ENCODE measurements at regions of chr20 and their contacts with region 1.

Region 1: GRCh38 chr20:45934586-45935415 is at the start of gene PCIF1:
- DNase-seq: peak; percentile 99
- H3K4me3 Mint-ChIP-seq: peak within 1 kb of the TSS; percentile 93
- H3K27ac Mint-ChIP-seq: peak within 1 kb of the TSS; percentile 95
- H3K4me1 Mint-ChIP-seq: peaks cover 30% of the 10 kb centered on the region
- H3K27me3 Mint-ChIP-seq: no peaks in the 10 kb centered on the region
- total RNA-seq, gene PCIF1: 39.2 to 39.5 TPM

Region 2: DNA sequence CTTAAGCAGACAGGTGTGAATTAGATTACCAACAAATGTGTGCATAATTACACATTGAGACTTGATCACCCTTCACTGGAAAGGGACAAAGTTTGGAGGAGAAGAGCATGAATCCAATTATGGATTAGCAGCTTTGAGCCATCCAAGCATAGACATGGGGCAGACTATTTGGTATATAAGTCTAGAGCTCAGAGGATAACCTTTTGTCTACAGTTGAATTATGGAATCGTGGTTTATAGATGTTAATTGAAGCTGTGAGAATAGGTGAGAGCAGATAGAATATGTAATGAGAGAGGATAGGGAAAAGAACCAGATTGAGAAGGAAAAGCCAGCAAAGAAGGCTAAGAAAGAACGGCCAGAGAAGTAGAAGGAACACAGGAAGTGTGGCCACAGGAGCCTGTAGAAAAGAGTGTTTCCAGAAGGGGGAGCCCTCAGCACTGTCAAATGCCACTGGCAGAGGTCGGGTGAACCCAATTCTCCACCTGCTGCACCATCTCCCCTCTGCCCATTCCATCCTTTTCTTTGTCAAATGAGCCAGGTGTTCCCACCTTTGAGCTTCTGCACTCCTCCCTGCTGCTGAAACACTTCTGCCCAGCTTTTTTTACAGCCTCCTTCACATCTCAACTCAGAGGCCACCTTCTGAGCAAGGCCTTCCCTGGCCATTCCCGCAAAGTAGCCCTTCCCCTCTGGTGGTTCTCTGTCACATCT is 135.7 kb before region 1 on chr20:
- CTCF ChIA-PET with region 1: interaction called, 9 read pairs
- intact Hi-C with region 1: loop called (anchors 5 kb)
- DNase-seq: peak; percentile 82
- H3K4me3 Mint-ChIP-seq: no peak overlapping the region
- H3K27ac Mint-ChIP-seq: no peak overlapping the region
- H3K4me1 Mint-ChIP-seq: peaks cover 10% of the 10 kb centered on the region
- H3K27me3 Mint-ChIP-seq: no peaks in the 10 kb centered on the region

Region 3: GRCh38 chr20:45822857-45823256 is 111.9 kb before region 1 on chr20:
- CTCF ChIA-PET with region 1: no interaction called
- intact Hi-C with region 1: no loop called
- DNase-seq: no peak
- H3K4me3 Mint-ChIP-seq: no peak overlapping the region
- H3K27ac Mint-ChIP-seq: no peak overlapping the region
- H3K4me1 Mint-ChIP-seq: peaks cover 13% of the 10 kb centered on the region
- H3K27me3 Mint-ChIP-seq: peaks cover 35% of the 10 kb centered on the region

Region 4: GRCh38 chr20:45857114-45857881 is 77.5 kb before region 1 on chr20 and contains the starts of genes ACOT8 and ZSWIM3:
- CTCF ChIA-PET with region 1: interaction called, 4 read pairs
- intact Hi-C with region 1: loop called (anchors 1 kb)
- DNase-seq: peak; percentile 98
- H3K4me3 Mint-ChIP-seq: peak within 1 kb of the TSS; percentile 95
- H3K27ac Mint-ChIP-seq: peak within 1 kb of the TSS; percentile 98
- H3K4me1 Mint-ChIP-seq: peaks cover 44% of the 10 kb centered on the region
- H3K27me3 Mint-ChIP-seq: no peaks in the 10 kb centered on the region
- total RNA-seq, gene ACOT8: 21.4 to 23.3 TPM
- total RNA-seq, gene ZSWIM3: 3.3 to 3.7 TPM

Region 5: DNA sequence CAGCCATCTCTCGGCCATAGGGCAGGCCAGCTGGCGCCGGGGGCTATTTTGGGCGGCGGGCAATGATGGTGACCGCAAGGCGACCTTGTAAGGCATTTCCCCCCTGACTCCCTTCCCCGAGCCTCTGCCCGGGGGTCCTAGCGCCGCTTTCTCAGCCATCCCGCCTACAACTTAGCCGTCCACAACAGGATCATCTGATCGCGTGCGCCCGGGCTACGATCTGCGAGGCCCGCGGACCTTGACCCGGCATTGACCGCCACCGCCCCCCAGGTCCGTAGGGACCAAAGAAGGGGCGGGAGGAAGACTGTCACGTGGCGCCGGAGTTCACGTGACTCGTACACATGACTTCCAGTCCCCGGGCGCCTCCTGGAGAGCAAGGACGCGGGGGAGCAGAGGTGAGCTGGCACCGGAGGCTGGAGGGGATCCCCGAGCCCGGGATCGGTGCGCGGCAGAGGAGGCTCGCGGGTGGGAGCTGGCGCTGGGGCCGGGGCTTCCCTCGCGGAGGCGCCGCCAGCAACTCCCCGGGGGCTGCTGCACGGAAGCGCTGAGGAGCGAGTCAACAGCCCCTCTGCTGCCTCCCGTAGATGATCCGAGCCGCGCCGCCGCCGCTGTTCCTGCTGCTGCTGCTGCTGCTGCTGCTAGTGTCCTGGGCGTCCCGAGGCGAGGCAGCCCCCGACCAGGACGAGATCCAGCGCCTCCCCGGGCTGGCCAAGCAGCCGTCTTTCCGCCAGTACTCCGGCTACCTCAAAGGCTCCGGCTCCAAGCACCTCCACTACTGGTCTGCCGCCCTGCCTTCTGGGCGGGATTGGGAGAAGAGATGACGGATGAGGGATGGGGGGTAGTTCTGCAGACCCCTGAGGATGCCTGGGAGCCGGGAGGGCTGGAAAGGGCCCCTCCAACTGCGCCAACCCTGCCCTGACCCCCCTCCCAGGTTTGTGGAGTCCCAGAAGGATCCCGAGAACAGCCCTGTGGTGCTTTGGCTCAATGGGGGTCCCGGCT is 43.5 kb before region 1 on chr20 and contains the starts of genes CTSA and NEURL2:
- CTCF ChIA-PET with region 1: no interaction called
- intact Hi-C with region 1: loop called (anchors 1 kb)
- DNase-seq: peak; percentile 91
- H3K4me3 Mint-ChIP-seq: peak within 1 kb of the TSS; percentile 89
- H3K27ac Mint-ChIP-seq: peak within 1 kb of the TSS; percentile 84
- H3K4me1 Mint-ChIP-seq: peaks cover 22% of the 10 kb centered on the region
- H3K27me3 Mint-ChIP-seq: no peaks in the 10 kb centered on the region
- total RNA-seq, gene CTSA: 28.7 to 31.5 TPM
- total RNA-seq, gene NEURL2: 0.99 to 1.4 TPM

Region 6: GRCh38 chr20:45963059-45964005 is 28.5 kb after region 1 on chr20:
- CTCF ChIA-PET with region 1: interaction called, 4 read pairs
- intact Hi-C with region 1: loop called (anchors 2 kb)
- DNase-seq: no peak
- H3K4me3 Mint-ChIP-seq: no peak overlapping the region
- H3K27ac Mint-ChIP-seq: no peak overlapping the region
- H3K4me1 Mint-ChIP-seq: peaks cover 2% of the 10 kb centered on the region
- H3K27me3 Mint-ChIP-seq: no peaks in the 10 kb centered on the region

Region 7: DNA sequence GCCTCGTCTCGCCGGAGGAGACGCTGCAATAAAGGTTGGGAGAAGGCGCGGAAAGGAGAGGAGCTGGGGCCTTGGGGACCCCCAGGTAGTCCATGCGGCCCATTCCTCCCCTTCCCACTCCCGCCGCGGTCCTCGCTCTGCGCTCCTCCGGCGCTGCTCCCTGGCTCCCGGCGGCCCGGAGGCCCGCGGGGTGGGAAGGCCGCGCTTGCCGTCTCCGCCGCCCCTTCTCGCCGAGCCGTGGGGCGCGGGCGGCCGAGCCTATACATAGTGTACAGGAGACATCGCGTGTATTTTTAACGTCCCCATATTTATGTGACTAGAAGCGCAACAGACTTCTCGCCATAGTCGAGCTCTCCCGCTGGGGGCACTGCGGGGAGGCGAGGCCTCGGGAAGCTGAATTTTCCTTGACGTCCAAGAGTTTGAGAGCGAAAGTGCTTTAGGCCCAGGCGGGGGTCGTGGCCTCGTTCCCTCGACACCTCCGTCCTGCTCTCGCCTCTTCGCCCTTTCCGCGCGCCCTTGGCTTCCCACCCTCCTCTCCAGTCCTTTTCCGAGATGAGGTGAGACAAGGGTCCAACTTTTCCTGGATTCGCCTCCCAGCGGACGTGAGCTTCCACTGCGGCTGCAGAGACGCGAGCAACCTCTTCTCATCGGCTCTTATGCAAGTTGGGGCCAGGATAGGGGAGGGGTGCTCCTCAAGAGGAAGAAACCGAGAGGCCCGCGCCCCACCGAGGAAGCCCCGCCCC is 123.2 kb after region 1 on chr20:
- CTCF ChIA-PET with region 1: no interaction called
- intact Hi-C with region 1: no loop called
- DNase-seq: peak; percentile 19
- H3K4me3 Mint-ChIP-seq: no peak overlapping the region
- H3K27ac Mint-ChIP-seq: no peak overlapping the region
- H3K4me1 Mint-ChIP-seq: peaks cover 41% of the 10 kb centered on the region
- H3K27me3 Mint-ChIP-seq: peaks cover 24% of the 10 kb centered on the region

Region 8: DNA sequence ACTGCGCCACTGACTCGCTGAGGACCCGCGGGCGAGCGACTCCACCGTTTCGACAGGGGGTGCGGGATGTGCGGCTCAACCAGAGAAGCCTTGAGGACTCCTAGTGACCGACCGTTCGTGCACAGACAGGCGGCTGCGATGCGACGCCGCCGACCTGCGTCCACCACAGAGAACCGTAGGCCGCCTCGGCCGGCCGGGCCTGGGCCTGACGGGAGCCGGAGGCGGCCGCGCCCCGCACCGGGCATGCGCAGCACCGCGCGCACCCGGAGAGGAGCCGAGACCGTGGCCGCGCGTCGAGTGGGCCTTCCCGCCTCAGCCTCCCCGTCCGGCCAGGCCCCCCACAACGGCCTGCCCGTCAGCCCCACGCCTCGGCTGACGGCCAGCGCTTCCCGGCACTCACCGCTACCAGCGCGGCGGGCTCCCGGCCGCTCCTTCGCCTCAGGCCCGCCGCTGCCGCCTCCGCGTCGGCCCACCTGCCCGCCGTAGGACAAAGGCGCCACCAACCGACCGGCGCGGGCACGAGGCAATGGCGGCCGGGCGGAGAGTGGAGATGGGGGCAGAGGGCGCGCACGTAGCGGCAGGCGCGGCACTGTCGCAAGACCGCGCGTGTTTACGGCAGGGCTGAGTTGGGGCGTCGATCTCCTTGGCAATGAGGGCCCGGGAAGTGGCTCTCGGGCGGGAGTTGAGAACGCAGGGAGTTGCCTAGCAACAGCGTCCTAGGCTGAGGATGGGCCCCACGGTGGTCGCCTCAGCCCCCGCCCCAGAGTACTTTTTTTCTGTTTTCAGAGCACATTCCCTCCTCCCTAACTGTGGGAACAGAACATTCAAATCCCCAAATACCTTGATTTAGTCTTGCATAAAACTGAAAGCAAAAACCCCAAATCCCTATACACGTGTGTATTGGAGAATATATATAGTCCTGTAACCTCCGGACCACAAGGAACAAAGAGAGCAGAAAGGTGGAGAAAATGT is 154.9 kb after region 1 on chr20 and contains the start of gene NCOA5:
- CTCF ChIA-PET with region 1: no interaction called
- intact Hi-C with region 1: loop called (anchors 1 kb)
- DNase-seq: peak; percentile 96
- H3K4me3 Mint-ChIP-seq: peak within 1 kb of the TSS; percentile 86
- H3K27ac Mint-ChIP-seq: peak within 1 kb of the TSS; percentile 77
- H3K4me1 Mint-ChIP-seq: peaks cover 47% of the 10 kb centered on the region
- H3K27me3 Mint-ChIP-seq: no peaks in the 10 kb centered on the region
- total RNA-seq, gene NCOA5: 4.4 to 5.1 TPM

Region 9: GRCh38 chr20:46689082-46689754 is 754.4 kb after region 1 on chr20 and contains the start of gene TP53RK:
- CTCF ChIA-PET with region 1: no interaction called
- intact Hi-C with region 1: loop called (anchors 5 kb)
- DNase-seq: peak; percentile 99
- H3K4me3 Mint-ChIP-seq: peak within 1 kb of the TSS; percentile 90
- H3K27ac Mint-ChIP-seq: peak within 1 kb of the TSS; percentile 87
- H3K4me1 Mint-ChIP-seq: peaks cover 32% of the 10 kb centered on the region
- H3K27me3 Mint-ChIP-seq: no peaks in the 10 kb centered on the region
- total RNA-seq, gene TP53RK: 7.8 to 8.3 TPM